ENCODE measurements at regions of chr15 and their contacts with region 1.

Region 1: GRCh38 chr15:40893733-40894688 is at the start of gene VPS18:
- DNase-seq: peak; percentile 72 to 95
- ATAC-seq: peak; percentile 95 to 96
- H3K4me3 ChIP-seq: peak within 1 kb of the TSS; percentile 79
- H3K27ac ChIP-seq: peak within 1 kb of the TSS; percentile 88 to 91
- H3K4me1 ChIP-seq: peaks cover 12% of the 10 kb centered on the region
- CTCF ChIP-seq: peak; percentile 68
- EP300 ChIP-seq: no peak
- POLR2A ChIP-seq: peak; percentile 47
- RAD21 ChIP-seq: peak; percentile 75 to 92
- polyA plus RNA-seq, gene VPS18: 9.0 and 10.7 TPM in 2 replicates

Region 2: GRCh38 chr15:40763801-40764732 is 129.9 kb before region 1 on chr15 and contains the start of gene GCHFR:
- CTCF ChIA-PET with region 1: interaction called, 12 read pairs
- POLR2A ChIA-PET with region 1: interaction called, 3 read pairs
- DNase-seq: peak; percentile 67 to 73
- ATAC-seq: peak; percentile 78 to 86
- H3K4me3 ChIP-seq: peak within 1 kb of the TSS; percentile 59
- H3K27ac ChIP-seq: peak within 1 kb of the TSS; percentile 74 to 89
- H3K4me1 ChIP-seq: peaks cover 14% of the 10 kb centered on the region; the same call in 2 of the 3 replicates
- CTCF ChIP-seq: peak; percentile 20; the same call in 1 of the 3 replicates
- EP300 ChIP-seq: no peak
- POLR2A ChIP-seq: 0 out of 2 replicates have a peak, but pooled peaks have one; percentile 6
- RAD21 ChIP-seq: no peak
- polyA plus RNA-seq, gene GCHFR: 6.9 and 7.7 TPM in 2 replicates

Region 3: DNA sequence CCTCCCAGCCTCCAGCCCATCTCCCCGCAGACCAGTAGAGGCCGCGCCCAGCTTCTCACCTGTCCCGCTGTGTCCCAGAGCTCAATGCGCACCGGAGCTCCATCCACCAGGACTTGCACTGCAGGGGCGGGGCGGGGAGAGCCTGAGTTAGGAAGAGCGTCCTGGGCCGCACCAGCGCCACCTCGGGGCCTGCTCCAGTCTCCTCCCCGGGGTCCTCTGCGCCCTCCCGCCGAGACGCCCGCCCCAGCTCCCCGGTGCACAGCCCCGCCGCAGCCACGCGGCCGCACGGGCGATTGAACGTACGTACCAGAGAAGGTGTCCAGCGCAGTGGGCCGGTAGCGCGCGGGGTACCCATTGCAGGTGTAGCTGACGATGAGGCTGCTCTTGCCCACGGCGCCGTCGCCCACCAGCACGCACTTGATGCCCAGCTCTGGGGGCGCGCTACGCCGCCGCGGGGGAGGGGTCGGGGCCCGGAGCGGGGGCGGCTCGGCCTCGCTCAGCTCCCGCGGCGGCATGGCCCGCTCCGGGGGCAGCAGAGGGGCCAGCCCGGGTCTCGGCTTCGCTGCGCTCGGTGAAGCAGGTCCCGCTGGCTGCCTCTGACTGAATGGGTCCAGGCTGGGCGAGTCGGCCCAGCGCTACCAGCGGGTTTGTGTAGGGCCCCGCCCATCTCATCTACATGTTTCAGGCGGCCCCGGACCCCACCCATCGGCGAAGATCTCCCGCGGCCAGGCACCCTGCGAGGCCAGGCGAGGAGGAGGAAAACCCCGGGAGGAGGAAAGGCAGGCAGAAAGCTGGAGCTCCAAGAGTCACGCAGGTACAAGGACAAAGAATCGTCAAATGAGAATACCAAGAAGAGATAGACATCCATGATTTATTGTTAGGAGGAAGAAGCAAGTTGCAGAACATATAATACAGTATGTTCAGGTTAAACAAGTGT is 20.1 kb before region 1 on chr15 and contains the start of gene RHOV:
- CTCF ChIA-PET with region 1: interaction called, 55 read pairs
- POLR2A ChIA-PET with region 1: interaction called, 11 read pairs
- DNase-seq: peak; percentile 76 to 83
- ATAC-seq: peak; percentile 95 to 96
- H3K4me3 ChIP-seq: peak within 1 kb of the TSS; percentile 92
- H3K27ac ChIP-seq: peak within 1 kb of the TSS; percentile 93 to 99
- H3K4me1 ChIP-seq: peaks cover 18% of the 10 kb centered on the region
- CTCF ChIP-seq: peak; percentile 40
- EP300 ChIP-seq: no peak
- POLR2A ChIP-seq: peak; percentile 57
- RAD21 ChIP-seq: peak; percentile 26 to 36; a peak in 3 of 5 replicates
- polyA plus RNA-seq, gene RHOV: 13.0 and 13.9 TPM in 2 replicates

Region 4: DNA sequence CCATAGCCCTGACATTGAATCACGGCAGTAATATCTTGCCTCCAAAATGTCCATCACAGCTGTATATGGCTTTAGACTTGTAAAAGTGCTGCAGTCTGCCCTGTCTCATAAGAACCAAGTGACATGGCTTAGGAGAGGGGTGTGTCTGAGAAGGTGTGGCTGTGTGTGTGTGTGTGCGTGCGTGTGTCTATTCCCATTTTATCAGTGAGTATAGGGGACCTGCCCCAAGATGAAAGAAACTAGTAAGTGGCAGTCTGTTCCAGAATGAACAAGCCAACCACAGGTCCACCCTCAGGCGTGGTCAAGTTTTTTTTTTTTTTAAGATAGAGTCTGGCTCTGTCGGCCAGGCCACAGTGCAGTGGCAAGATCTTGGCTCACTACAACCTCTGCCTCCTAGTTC is 14.4 kb before region 1 on chr15:
- CTCF ChIA-PET with region 1: interaction called, 55 read pairs
- POLR2A ChIA-PET with region 1: no interaction called
- DNase-seq: no peak
- ATAC-seq: no peak
- H3K4me3 ChIP-seq: no peak overlapping the region
- H3K27ac ChIP-seq: 0 out of 6 replicates have a peak overlapping the region, but pooled peaks of 1 of the 2 experiments have one; percentile 57
- H3K4me1 ChIP-seq: peaks cover 14% of the 10 kb centered on the region
- CTCF ChIP-seq: no peak
- EP300 ChIP-seq: no peak
- POLR2A ChIP-seq: no peak
- RAD21 ChIP-seq: no peak